ENCODE measurements at regions of chr13 and their contacts with region 1.

Region 1: DNA sequence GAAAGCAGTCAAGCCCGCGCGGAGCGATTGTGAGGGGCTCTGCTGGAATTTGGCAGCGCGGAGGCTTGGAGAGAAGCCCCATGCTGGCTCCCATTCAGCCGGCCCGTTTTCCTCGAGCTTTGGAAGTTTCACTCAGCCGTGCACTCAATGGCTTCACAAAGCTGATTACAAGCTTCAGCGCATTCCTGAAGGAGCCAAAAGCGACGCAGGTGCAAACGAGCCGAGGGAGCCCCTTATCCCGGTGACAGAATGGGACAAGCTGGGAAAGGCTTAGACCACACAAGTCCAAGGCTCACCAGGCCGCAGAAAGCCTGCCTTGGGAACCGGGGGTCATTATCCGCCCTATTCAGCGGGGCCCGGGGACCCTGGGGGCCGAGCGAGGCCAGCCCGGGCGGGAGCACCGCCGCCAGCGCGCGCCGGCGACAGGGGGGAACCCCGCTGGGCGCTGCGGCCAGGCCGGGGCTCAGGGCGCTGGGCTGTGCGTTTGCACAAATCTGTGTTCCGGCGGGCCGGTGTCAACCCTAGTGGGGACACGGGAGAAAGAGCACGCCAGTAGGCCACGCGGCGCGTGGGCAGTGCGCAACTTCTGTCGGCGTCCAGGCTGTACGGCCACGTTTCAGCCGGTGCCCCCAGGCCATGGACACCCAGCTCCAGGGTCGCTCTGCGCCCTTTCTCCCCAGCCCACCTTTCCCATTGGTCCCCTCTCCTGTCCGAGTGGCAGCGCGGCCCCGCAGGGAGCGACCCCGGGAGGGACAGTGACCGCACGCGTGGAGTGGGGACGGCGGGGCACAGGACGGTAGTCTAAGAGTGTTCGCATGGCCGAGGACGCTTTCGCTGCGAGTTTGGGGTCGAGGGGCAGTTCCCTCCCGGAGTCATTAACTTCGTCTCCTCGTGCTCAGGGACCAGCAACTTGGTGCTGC is 37.3 kb downstream of the SOX1 start:
- DNase-seq: no peak
- ATAC-seq: no peak
- H3K4me3 ChIP-seq: no peak overlapping the region
- H3K4me3 Mint-ChIP-seq: no peak overlapping the region
- H3K27ac ChIP-seq: no peak overlapping the region
- H3K27ac Mint-ChIP-seq: peak overlapping the region in 1 of 9 donors; percentile 29
- H3K4me1 ChIP-seq: no peaks in the 10 kb centered on the region
- H3K4me1 Mint-ChIP-seq: peaks cover 0 to 8% (median 4%) of the 10 kb centered on the region in 7 donors
- H3K27me3 ChIP-seq: peaks cover 0 to 4% of the 10 kb centered on the region in 2 donors
- H3K27me3 Mint-ChIP-seq: peaks cover 61 to 72% (median 64%) of the 10 kb centered on the region in 5 donors

Region 2: GRCh38 chr13:112067871-112068539 is 36.2 kb before region 1 on chr13:
- CTCF ChIA-PET with region 1: no interaction called
- POLR2A ChIA-PET with region 1: no interaction called
- intact Hi-C with region 1: loop called in 1 of 2 experiments (anchors 2 kb)
- DNase-seq: no peak
- ATAC-seq: no peak
- H3K4me3 ChIP-seq: no peak overlapping the region
- H3K4me3 Mint-ChIP-seq: peak overlapping the region in 2 of 10 donors; percentile 34 to 80
- H3K27ac ChIP-seq: no peak overlapping the region
- H3K27ac Mint-ChIP-seq: peak overlapping the region in 1 of 9 donors; percentile 29
- H3K4me1 ChIP-seq: peaks cover 0 to 9% of the 10 kb centered on the region in 2 donors
- H3K4me1 Mint-ChIP-seq: peaks cover 4 to 33% (median 25%) of the 10 kb centered on the region in 7 donors
- H3K27me3 ChIP-seq: peaks cover 4 to 26% of the 10 kb centered on the region in 2 donors
- H3K27me3 Mint-ChIP-seq: peaks cover 53 to 68% (median 62%) of the 10 kb centered on the region in 5 donors

Region 3: GRCh38 chr13:112124141-112124540 is 19.9 kb after region 1 on chr13:
- CTCF ChIA-PET with region 1: no interaction called
- POLR2A ChIA-PET with region 1: no interaction called
- intact Hi-C with region 1: no loop called
- DNase-seq: no peak
- ATAC-seq: no peak
- H3K4me3 ChIP-seq: no peak overlapping the region
- H3K4me3 Mint-ChIP-seq: no peak overlapping the region
- H3K27ac ChIP-seq: no peak overlapping the region
- H3K27ac Mint-ChIP-seq: no peak overlapping the region
- H3K4me1 ChIP-seq: no peaks in the 10 kb centered on the region
- H3K4me1 Mint-ChIP-seq: no peaks in the 10 kb centered on the region
- H3K27me3 ChIP-seq: no peaks in the 10 kb centered on the region
- H3K27me3 Mint-ChIP-seq: peaks cover 0 to 27% (median 17%) of the 10 kb centered on the region in 5 donors

Measured in naive thymus-derived CD4-positive, alpha-beta T cell (primary cell).